ENCODE measurements at regions of chr6 and their contacts with region 1.

Region 1: GRCh38 chr6:27772261-27773001 is 139.8 kb downstream of the OR2B2 start:
- DNase-seq: peak; percentile 93
- H3K4me3 Mint-ChIP-seq: peak overlapping the region; percentile 40
- H3K27ac Mint-ChIP-seq: peak overlapping the region; percentile 18
- H3K4me1 Mint-ChIP-seq: peaks cover 7% of the 10 kb centered on the region
- H3K27me3 Mint-ChIP-seq: peaks cover 12% of the 10 kb centered on the region

Region 2: GRCh38 chr6:27761391-27761790 is 11.0 kb before region 1 on chr6:
- CTCF ChIA-PET with region 1: interaction called, 29 read pairs
- POLR2A ChIA-PET with region 1: interaction called, 5 read pairs
- intact Hi-C with region 1: no loop called
- DNase-seq: peak; percentile 34
- H3K4me3 Mint-ChIP-seq: no peak overlapping the region
- H3K27ac Mint-ChIP-seq: no peak overlapping the region
- H3K4me1 Mint-ChIP-seq: peaks cover 28% of the 10 kb centered on the region
- H3K27me3 Mint-ChIP-seq: no peaks in the 10 kb centered on the region

Region 3: DNA sequence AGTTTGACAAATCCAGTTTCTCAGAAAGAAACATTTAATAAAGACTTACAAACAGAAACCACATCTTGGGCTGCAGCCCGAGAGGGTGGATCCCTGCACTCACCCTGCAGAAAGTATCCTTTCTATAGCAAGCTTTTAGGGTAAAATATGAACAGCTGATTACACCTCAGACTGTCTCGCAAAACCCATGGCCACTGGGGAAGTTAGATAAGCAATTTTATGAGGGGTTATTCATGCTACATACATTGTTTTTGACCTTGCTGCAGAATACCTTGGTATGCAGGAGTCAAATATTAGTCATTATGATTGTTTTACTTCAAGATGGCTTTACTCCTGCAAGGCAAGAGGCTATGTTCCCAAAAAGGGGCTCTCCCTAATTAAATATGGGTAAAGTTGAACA is 12.9 kb after region 1 on chr6:
- CTCF ChIA-PET with region 1: interaction called, 19 read pairs
- POLR2A ChIA-PET with region 1: no interaction called
- intact Hi-C with region 1: no loop called
- DNase-seq: no peak
- H3K4me3 Mint-ChIP-seq: no peak overlapping the region
- H3K27ac Mint-ChIP-seq: no peak overlapping the region
- H3K4me1 Mint-ChIP-seq: no peaks in the 10 kb centered on the region
- H3K27me3 Mint-ChIP-seq: peaks cover 5% of the 10 kb centered on the region

Region 4: DNA sequence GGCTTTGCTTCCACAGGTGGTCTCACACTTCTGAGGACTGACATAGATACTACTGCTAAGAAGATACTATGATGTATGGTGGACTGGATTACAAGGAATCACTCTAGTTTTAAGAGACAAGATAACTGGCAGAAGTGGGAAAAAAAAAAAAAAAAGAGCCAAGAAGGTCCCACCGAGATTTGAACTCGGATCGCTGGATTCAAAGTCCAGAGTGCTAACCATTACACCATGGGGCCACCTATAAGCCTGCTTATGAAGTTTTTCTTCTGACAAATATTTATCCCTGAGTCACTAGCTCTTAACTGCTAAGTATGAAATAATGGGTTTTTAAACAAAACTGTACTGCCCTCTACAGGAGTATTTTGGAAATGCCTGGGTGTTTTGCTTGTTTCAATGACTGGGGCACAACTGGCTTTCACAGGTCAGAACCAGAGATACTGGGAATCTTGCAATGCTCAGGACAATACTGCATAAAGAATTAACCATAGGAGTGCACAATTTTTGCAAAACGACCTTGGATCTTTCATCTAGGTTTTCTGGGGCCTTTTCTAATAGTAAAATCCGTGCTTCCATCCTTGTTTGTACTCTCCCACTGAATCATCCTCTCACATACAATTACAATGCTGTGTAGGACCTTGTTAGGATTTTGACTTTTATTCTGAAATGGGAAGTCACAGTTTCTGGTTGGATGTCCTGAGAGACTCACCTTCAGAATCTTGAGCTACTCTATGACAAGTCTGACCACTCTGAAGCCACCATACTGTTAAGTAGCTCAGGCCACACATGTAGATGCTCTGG is 23.5 kb after region 1 on chr6:
- CTCF ChIA-PET with region 1: interaction called, 97 read pairs
- POLR2A ChIA-PET with region 1: no interaction called
- intact Hi-C with region 1: loop called (anchors 1 kb)
- DNase-seq: peak; percentile 39
- H3K4me3 Mint-ChIP-seq: no peak overlapping the region
- H3K27ac Mint-ChIP-seq: peak overlapping the region; percentile 67
- H3K4me1 Mint-ChIP-seq: peaks cover 22% of the 10 kb centered on the region
- H3K27me3 Mint-ChIP-seq: peaks cover 8% of the 10 kb centered on the region